Right ventricle myocardium inferior (tissue), 1 donor: ENCODE measurements at regions of chr11 and their contacts with region 1.

Region 1: GRCh38 chr11:63906585-63906984 is 10.4 kb downstream of the RCOR2 start:
- DNase-seq: no peak
- ATAC-seq: no peak

Region 2: GRCh38 chr11:63945477-63946163 is 39.0 kb after region 1 on chr11:
- intact Hi-C with region 1: loop called (anchors 5 kb)
- DNase-seq: peak; percentile 71
- ATAC-seq: peak; percentile 84